Aorta (tissue), 5 donors: ENCODE measurements at regions of chr17 and their contacts with region 1.

Region 1: DNA sequence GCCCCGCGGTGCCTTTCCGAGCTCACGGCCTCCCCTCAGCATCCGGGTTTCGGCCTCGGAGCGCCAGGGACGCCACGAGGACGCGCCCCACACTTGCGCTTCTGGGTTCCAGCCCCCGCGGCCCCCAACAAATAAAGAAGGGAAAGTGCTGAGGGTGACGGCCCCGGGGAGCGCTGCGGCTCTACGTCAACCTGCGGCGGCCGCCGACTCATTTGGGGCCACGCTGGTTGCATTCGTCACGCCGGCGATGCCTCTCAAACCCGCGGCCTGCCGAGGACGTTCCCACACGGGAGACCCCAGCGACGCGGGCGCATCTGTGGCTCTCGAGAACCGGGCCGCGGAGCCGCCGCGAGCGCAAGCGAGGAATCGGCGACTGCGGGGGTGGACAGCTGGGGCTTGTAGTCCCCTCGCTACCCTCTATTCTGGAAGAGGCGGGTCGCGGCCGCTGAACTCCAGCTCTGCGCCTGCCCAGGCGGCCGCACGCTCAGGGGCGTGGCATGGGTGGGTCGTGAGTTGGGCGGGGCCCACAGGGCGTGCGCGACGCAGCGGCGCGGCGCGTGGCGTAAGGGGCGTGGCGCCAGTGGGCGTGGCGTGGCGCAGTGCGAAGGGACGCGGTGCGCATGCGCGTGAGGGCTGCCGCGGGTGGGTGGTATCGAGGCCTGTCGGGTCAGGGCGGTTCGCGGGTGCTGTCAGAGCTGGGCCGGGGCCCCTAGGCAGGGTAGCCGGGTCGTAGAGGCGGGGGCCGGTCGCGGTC is at the start of gene AMZ2:
- DNase-seq: peak; percentile 96 to 99
- ATAC-seq: peak; percentile 99
- H3K4me3 ChIP-seq: peak within 1 kb of the TSS; percentile 64 to 71
- H3K27ac ChIP-seq: peak within 1 kb of the TSS; percentile 25 to 77
- H3K4me1 ChIP-seq: peaks cover 0 to 2% of the 10 kb centered on the region in 2 donors
- H3K27me3 ChIP-seq: no peaks in the 10 kb centered on the region
- total RNA-seq, gene AMZ2: 32.4 to 47.9 TPM

Region 2: GRCh38 chr17:68101075-68101992 is 146.3 kb before region 1 on chr17:
- intact Hi-C with region 1: loop called in 1 of 2 experiments (anchors 10 kb)
- DNase-seq: peak; percentile 98 to 99
- ATAC-seq: peak; percentile 99
- H3K4me3 ChIP-seq: peak overlapping the region; percentile 74 to 82
- H3K27ac ChIP-seq: peak overlapping the region in 1 of 2 donors; percentile 1
- H3K4me1 ChIP-seq: no peaks in the 10 kb centered on the region
- H3K27me3 ChIP-seq: no peaks in the 10 kb centered on the region

Region 3: GRCh38 chr17:68205251-68205807 is 42.3 kb before region 1 on chr17:
- intact Hi-C with region 1: loop called in 1 of 2 experiments (anchors 5 kb)
- DNase-seq: peak; percentile 96 to 98
- ATAC-seq: peak; percentile 96
- H3K4me3 ChIP-seq: peak overlapping the region; percentile 72 to 84
- H3K27ac ChIP-seq: no peak overlapping the region
- H3K4me1 ChIP-seq: peaks cover 0 to 2% of the 10 kb centered on the region in 2 donors
- H3K27me3 ChIP-seq: no peaks in the 10 kb centered on the region

Region 4: GRCh38 chr17:68435876-68436842 is 188.5 kb after region 1 on chr17:
- intact Hi-C with region 1: loop called in 1 of 2 experiments (anchors 5 kb)
- DNase-seq: peak; percentile 82 to 85
- ATAC-seq: peak; percentile 88
- H3K4me3 ChIP-seq: no peak overlapping the region
- H3K27ac ChIP-seq: no peak overlapping the region
- H3K4me1 ChIP-seq: no peaks in the 10 kb centered on the region
- H3K27me3 ChIP-seq: no peaks in the 10 kb centered on the region

Region 5: GRCh38 chr17:68457539-68458259 is 210.1 kb after region 1 on chr17:
- intact Hi-C with region 1: loop called (anchors 5 kb)
- DNase-seq: peak; percentile 99
- ATAC-seq: peak; percentile 98
- H3K4me3 ChIP-seq: peak overlapping the region; percentile 41 to 44
- H3K27ac ChIP-seq: peak overlapping the region in 1 of 2 donors; percentile 62
- H3K4me1 ChIP-seq: peaks cover 0 to 2% of the 10 kb centered on the region in 2 donors
- H3K27me3 ChIP-seq: no peaks in the 10 kb centered on the region

Region 6: GRCh38 chr17:68512247-68512982 is 264.8 kb after region 1 on chr17 and contains the start of gene PRKAR1A:
- intact Hi-C with region 1: loop called in 1 of 2 experiments (anchors 5 kb)
- DNase-seq: peak; percentile 97 to 98
- ATAC-seq: peak; percentile 97
- H3K4me3 ChIP-seq: peak within 1 kb of the TSS; percentile 68 to 89
- H3K27ac ChIP-seq: peak within 1 kb of the TSS; percentile 72 to 96
- H3K4me1 ChIP-seq: no peaks in the 10 kb centered on the region
- H3K27me3 ChIP-seq: no peaks in the 10 kb centered on the region
- total RNA-seq, gene PRKAR1A: 251 to 297 TPM